Heart right ventricle (tissue), 16 donors: ENCODE measurements at regions of chr5 and their contacts with region 1.

Region 1: GRCh38 chr5:38650946-38651345 is 94.5 kb upstream of the LIFR start:
- DNase-seq: no peak
- ATAC-seq: peak in 2 of 8 donors; percentile 49 to 58
- H3K4me3 ChIP-seq: peak overlapping the region in 6 of 10 donors; percentile 2 to 34 (median 20)
- H3K27ac ChIP-seq: peak overlapping the region in 3 of 10 donors; percentile 3 to 35 (median 5)
- H3K4me1 ChIP-seq: peaks cover 0 to 10% (median 3%) of the 10 kb centered on the region in 9 donors
- H3K27me3 ChIP-seq: no peaks in the 10 kb centered on the region
- CTCF ChIP-seq: no peak

Region 2: GRCh38 chr5:38576442-38576841 is 74.5 kb before region 1 on chr5:
- intact Hi-C with region 1: loop called in 1 of 10 experiments (anchors 10 kb)
- DNase-seq: peak in 1 of 2 donors; percentile 49
- ATAC-seq: peak; percentile 72 to 96 (median 94)
- H3K4me3 ChIP-seq: no peak overlapping the region
- H3K27ac ChIP-seq: peak overlapping the region in 7 of 10 donors; percentile 15 to 69 (median 53)
- H3K4me1 ChIP-seq: peaks cover 0 to 16% (median 0%) of the 10 kb centered on the region in 9 donors
- H3K27me3 ChIP-seq: no peaks in the 10 kb centered on the region
- CTCF ChIP-seq: no peak